Gastrocnemius medialis (tissue), 4 donors: ENCODE measurements at regions of chr4 and their contacts with region 1.

Region 1: DNA sequence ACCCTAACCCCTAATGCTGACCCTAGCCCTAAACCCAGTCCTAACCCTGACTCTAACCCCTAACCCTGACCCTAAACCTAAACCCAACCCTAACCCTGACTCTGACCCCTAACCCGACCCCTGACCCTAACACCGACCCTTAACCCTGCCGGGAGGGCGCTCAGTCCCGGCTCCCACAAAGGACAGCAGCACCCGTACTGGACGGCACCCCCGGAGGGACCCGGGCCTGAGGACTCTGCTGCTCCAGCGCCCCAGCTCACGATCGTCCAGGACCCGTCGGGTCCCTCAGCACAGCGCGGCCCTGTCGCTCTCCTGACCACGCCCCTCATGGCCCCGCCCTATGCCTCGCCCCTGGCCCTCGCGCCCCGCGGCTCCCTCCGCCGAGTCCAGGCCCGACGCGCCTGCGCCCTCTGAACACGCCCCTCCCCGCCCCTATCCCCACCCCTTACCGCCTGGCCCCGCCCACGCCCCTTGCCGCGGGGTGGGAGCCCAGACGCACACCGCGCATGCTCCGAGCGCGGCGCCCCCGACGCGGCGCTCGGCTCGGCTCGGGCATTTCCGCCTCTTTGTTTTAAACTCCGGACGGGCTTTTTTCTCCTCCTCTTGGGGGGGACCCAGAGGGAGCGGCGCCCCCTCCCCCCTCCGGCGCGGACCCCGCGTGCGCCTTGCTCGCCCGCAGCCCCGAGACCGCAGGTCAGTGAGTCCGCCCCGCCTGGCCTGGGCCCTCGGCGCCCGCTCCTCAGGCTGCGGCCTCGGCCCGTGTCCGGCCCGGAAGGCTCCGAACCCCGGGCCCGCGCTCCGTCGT is at the start of gene PCGF3:
- DNase-seq: peak; percentile 95
- ATAC-seq: peak; percentile 96 to 98
- H3K4me3 ChIP-seq: peak within 1 kb of the TSS; percentile 79 to 97 (median 87)
- H3K27ac ChIP-seq: peak within 1 kb of the TSS; percentile 67 to 92 (median 84)
- H3K4me1 ChIP-seq: peaks cover 21 to 27% of the 10 kb centered on the region in 2 donors
- H3K27me3 ChIP-seq: no peaks in the 10 kb centered on the region
- CTCF ChIP-seq: no peak
- POLR2A ChIP-seq: peak; percentile 65 to 81
- total RNA-seq, gene PCGF3: 14.5 to 31.9 (median 21.6) TPM

Region 2: DNA sequence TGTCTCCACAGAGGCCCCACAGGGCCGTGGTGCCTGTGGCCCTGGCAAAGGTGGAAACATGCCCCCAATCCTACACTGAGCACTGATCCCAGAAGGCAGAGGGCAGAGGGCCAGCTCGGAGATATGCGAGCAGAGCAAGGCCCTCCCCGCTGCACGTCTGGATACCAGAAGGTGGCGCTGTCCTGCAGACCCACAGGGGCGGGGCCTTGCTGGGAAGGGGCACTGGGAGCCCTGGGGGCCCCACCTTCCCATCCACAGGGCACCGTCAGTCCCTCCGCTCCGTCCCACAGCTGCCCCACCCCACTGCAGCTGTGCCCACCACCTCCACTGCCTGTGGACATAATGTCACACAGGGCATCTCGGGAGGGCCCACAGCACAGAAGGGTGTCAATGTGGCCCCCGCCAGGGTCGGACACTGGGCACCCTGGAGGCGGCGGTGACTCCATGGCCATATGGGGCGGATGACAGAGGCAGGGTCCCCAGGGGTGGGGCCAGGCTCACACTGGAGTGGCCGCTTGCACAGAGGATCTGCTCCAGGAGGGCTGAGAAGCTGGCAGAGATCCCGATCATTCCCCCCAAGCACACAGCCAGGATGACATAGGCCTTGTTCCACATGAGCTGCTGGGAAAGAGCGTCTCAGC is 21.4 kb before region 1 on chr4:
- in situ Hi-C with region 1: no loop called
- intact Hi-C with region 1: loop called (anchors 2 kb)
- DNase-seq: peak in 1 of 2 donors; percentile 64
- ATAC-seq: peak in 1 of 2 donors; percentile 14
- H3K4me3 ChIP-seq: no peak overlapping the region
- H3K27ac ChIP-seq: no peak overlapping the region
- H3K4me1 ChIP-seq: peaks cover 17 to 30% of the 10 kb centered on the region in 2 donors
- H3K27me3 ChIP-seq: peaks cover 0 to 19% (median 6%) of the 10 kb centered on the region in 3 donors
- CTCF ChIP-seq: peak; percentile 46 to 71 (median 62)
- POLR2A ChIP-seq: no peak